Activated naive CD4-positive, alpha-beta T cell treated with anti-CD3 and anti-CD28 coated beads, Interleukin-2, amount 10 ng/mL, durations not matched to agents 7 days and 5 days (primary cell): ENCODE measurements at regions of chr13 and their contacts with region 1.

Region 1: DNA sequence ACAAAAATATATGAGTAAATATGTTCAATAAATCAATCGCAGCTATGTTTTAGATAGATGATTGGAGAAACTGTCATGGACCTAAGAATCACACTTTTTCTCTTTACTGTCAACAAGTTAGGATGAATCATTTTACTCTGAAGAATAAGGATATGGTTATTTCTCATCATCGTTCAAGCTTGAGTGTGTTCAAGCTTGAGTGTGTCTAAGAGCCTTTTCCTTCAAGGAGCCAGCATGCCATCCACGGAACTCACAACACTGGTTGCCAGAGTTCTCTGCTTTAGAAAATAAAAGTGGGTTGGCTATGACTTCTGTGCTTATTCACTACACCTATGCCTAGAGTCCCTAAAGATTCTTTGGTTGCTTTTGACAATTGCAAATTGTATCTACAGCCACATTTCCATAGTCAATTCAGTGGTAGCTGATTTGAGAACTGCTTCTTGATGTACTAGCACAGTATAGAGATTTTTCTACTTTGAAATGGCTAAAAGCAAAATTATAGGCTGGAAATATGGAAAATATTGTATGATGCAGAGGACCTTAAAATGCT is 58.1 kb upstream of the SCEL start:
- DNase-seq: no peak
- H3K4me3 Mint-ChIP-seq: no peak overlapping the region
- H3K27ac Mint-ChIP-seq: no peak overlapping the region
- H3K4me1 Mint-ChIP-seq: peaks cover 11% of the 10 kb centered on the region
- H3K27me3 Mint-ChIP-seq: peaks cover 14% of the 10 kb centered on the region

Region 2: GRCh38 chr13:77329133-77329910 is 148.1 kb before region 1 on chr13:
- CTCF ChIA-PET with region 1: interaction called, 26 read pairs
- DNase-seq: peak; percentile 96
- H3K4me3 Mint-ChIP-seq: peak overlapping the region; percentile 92
- H3K27ac Mint-ChIP-seq: peak overlapping the region; percentile 95
- H3K4me1 Mint-ChIP-seq: peaks cover 46% of the 10 kb centered on the region
- H3K27me3 Mint-ChIP-seq: peaks cover 9% of the 10 kb centered on the region

Region 3: DNA sequence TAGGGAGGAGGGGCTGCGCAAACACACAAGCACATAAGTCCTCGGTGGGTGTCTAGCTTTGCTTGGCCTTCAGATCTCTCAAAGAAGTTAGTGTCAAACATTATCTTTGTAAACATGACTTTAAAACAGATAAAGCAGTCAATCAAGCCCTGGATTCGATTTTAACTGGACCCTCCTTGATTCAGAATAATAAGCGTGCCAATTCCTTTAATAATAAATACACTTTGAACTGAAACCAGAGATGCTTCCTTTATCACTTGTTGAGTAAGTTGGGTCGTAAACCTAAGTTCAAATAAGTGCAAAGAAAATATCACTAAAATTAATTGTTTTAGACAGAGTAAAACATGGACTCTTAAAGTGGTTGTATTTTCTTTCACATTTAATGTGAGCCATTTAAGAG is 1095.1 kb after region 1 on chr13:
- CTCF ChIA-PET with region 1: no interaction called
- DNase-seq: no peak
- H3K4me3 Mint-ChIP-seq: no peak overlapping the region
- H3K27ac Mint-ChIP-seq: no peak overlapping the region
- H3K4me1 Mint-ChIP-seq: no peaks in the 10 kb centered on the region
- H3K27me3 Mint-ChIP-seq: peaks cover 5% of the 10 kb centered on the region